ENCODE measurements at regions of chr17 and their contacts with region 1.

Region 1: DNA sequence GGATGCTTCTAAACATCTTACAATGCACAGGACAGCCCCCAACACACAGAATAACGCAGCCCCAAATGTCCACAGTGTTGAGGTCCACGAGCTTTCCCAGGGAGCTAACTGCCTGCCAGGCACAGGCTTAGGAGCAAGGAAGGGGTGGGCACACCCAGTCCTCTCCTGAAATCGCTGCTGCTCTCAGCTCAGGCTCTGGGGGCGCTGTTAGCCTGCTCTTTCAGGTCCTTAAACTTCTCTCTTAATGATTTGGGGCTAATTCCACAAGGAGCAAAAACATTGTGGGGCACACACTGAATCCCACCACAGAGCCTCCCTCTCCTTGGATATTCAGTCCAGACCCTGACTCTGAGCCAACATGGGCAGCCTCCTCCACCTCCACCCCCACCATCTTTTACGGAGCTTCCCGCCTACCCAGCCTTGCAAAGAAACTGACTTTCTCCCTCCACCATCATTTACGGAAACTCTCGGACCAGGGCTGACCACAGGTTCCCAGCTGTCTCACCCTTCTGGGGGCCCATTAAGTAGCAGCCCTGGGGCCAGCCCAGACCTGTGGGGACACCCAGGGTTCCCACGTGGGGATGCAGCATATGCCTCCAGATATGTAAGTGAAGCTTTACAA is 1.1 kb downstream of the CD300H start:
- DNase-seq: peak; percentile 74

Region 2: DNA sequence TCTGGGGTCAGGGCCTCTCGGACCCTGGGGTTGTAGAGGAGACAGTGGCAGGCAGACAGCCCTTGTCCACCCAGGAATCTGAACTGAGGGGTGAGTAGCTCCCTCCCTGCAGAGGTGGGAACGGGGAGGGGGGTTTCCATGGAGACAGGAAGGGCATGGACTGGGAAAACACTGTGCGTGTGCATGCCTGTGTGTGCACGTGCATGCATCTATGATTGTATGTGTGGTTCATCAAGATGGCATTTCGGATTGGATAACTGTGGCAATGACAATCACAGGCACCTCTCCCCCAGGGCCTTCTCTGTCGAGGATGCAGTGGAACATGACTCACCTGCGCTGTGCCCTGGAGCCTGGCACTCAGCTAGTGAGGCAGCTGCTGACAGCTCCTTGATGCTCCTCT is 14.2 kb before region 1 on chr17:
- CTCF ChIA-PET with region 1: interaction called, 22 read pairs
- POLR2A ChIA-PET with region 1: no interaction called
- DNase-seq: no peak